ENCODE measurements at regions of chr6 and their contacts with region 1.

Region 1: GRCh38 chr6:37499433-37500293 is at the start of gene CCDC167:
- DNase-seq: peak; percentile 95
- H3K4me3 ChIP-seq: peak within 1 kb of the TSS; percentile 39 to 76 (median 62)
- H3K27ac ChIP-seq: peak within 1 kb of the TSS; percentile 47 to 73 (median 58)
- H3K4me1 ChIP-seq: peaks cover 0 to 7% (median 0%) of the 10 kb centered on the region in 4 donors
- H3K27me3 ChIP-seq: no peaks in the 10 kb centered on the region
- CTCF ChIP-seq: no peak
- EP300 ChIP-seq: no peak
- POLR2A ChIP-seq: no peak
- total RNA-seq, gene CCDC167: 16.9 to 21.8 TPM in 2 of 4 donors, not detected in the others

Region 2: DNA sequence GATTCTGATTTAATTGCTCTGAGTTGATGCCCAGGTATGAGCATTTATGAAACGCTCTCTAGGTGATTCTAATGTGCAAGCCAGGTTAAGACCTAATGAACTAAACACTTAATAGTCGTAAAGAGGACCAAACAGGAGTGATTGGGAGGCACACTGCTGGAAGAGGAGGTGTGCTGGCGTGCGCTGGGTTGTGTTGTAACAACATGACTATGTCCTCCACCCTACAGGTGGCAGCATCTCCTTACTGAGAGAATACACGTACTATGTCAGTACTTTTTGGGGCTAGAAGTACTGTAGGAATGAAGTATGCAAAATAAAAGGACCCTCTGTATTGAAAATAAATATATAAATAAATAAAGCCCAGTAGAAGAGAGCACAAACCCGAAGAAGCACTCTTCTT is 602.1 kb before region 1 on chr6:
- in situ Hi-C with region 1: no loop called
- intact Hi-C with region 1: no loop called
- DNase-seq: no peak
- H3K4me3 ChIP-seq: no peak overlapping the region
- H3K27ac ChIP-seq: no peak overlapping the region
- H3K4me1 ChIP-seq: no peaks in the 10 kb centered on the region
- H3K27me3 ChIP-seq: no peaks in the 10 kb centered on the region
- CTCF ChIP-seq: no peak
- EP300 ChIP-seq: no peak
- POLR2A ChIP-seq: no peak

Region 3: DNA sequence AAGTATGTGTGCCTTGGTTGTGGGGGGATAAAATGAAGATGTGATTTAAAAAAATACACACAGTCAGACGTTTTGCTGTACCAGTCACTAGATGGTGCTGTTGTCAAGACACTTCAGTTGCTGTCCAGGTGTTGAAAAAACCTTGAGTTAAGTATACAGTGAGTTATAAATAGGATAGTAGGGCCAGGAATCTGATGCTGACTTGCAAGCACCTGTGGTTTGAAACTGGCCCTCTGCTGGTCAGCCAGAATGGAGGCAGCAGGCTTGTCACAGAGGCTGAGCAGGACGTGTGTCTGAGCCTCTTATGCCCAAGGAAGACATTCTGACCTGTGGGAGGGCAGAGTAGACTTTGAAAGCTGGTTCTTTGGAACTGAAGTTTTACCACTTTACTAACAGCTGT is 118.1 kb before region 1 on chr6:
- in situ Hi-C with region 1: no loop called
- intact Hi-C with region 1: loop called (anchors 10 kb)
- DNase-seq: peak; percentile 16
- H3K4me3 ChIP-seq: no peak overlapping the region
- H3K27ac ChIP-seq: no peak overlapping the region
- H3K4me1 ChIP-seq: no peaks in the 10 kb centered on the region
- H3K27me3 ChIP-seq: no peaks in the 10 kb centered on the region
- CTCF ChIP-seq: peak; percentile 54 to 66 (median 55)
- EP300 ChIP-seq: no peak
- POLR2A ChIP-seq: no peak

Region 4: DNA sequence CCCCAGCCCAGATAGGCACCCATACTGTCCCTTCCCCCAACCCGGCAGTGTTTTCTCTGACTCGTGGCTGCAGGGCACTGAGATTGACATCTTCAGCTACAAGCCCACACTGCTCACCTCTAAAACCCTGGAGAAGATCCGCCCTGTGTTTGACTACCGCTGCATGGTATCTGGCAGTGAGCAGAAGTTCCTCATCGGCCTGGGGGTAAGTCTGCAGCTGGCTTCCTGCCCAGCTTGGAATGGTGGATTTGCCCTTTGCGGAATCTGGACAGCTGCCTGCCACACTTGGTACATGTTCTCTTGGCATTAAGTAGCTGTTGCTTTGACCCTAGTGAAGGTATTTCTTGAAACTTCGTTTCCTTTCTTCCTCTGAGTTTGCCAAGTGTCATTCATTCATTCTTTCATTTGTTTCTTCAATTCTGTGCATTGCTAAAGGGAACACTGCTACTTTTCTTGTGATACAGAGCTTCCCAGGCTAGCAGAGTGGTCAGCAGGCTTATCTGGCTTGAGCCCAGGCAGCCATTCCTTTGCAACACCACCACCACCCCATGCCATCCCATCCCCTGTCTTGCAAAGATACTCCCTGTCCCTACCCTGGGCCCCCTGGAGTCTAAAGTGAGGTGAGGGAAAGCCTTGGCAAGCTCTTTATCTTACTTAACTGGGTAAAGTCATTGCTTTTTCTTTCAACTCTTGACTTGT is 26.1 kb before region 1 on chr6:
- in situ Hi-C with region 1: no loop called
- intact Hi-C with region 1: no loop called
- DNase-seq: no peak
- H3K4me3 ChIP-seq: no peak overlapping the region
- H3K27ac ChIP-seq: peak overlapping the region in 1 of 4 donors; percentile 8
- H3K4me1 ChIP-seq: no peaks in the 10 kb centered on the region
- H3K27me3 ChIP-seq: no peaks in the 10 kb centered on the region
- CTCF ChIP-seq: no peak
- EP300 ChIP-seq: no peak
- POLR2A ChIP-seq: no peak